ENCODE measurements at regions of chr22 and their contacts with region 1.

Region 1: GRCh38 chr22:48492366-48493320 is 1335.0 kb downstream of the BRD1 start:
- DNase-seq: peak in 3 of 9 experiments; percentile 15 to 57 (median 51)
- ATAC-seq: no peak
- H3K4me3 ChIP-seq: no peak overlapping the region
- H3K4me3 Mint-ChIP-seq: no peak overlapping the region
- H3K27ac ChIP-seq: no peak overlapping the region
- H3K27ac Mint-ChIP-seq: no peak overlapping the region
- H3K4me1 ChIP-seq: no peaks in the 10 kb centered on the region
- H3K4me1 Mint-ChIP-seq: peaks cover 2% of the 10 kb centered on the region
- H3K27me3 ChIP-seq: peaks cover 4 to 15% of the 10 kb centered on the region in 2 experiments
- H3K27me3 Mint-ChIP-seq: peaks cover 43% of the 10 kb centered on the region
- CTCF ChIP-seq: no peak

Region 2: GRCh38 chr22:47213571-47214230 is 1278.9 kb before region 1 on chr22:
- CTCF ChIA-PET with region 1: no interaction called
- POLR2A ChIA-PET with region 1: no interaction called
- intact Hi-C with region 1: loop called in 1 of 2 experiments (anchors 5 kb)
- DNase-seq: peak in 6 of 9 experiments; percentile 9 to 58 (median 39)
- ATAC-seq: peak; percentile 31
- H3K4me3 ChIP-seq: no peak overlapping the region
- H3K4me3 Mint-ChIP-seq: no peak overlapping the region
- H3K27ac ChIP-seq: no peak overlapping the region
- H3K27ac Mint-ChIP-seq: no peak overlapping the region
- H3K4me1 ChIP-seq: no peaks in the 10 kb centered on the region
- H3K4me1 Mint-ChIP-seq: no peaks in the 10 kb centered on the region
- H3K27me3 ChIP-seq: no peaks in the 10 kb centered on the region
- H3K27me3 Mint-ChIP-seq: peaks cover 4% of the 10 kb centered on the region
- CTCF ChIP-seq: peak; percentile 68

Region 3: GRCh38 chr22:48507595-48508350 is 15.1 kb after region 1 on chr22:
- CTCF ChIA-PET with region 1: no interaction called
- POLR2A ChIA-PET with region 1: no interaction called
- intact Hi-C with region 1: no loop called
- DNase-seq: peak in 1 of 9 experiments; percentile 4
- ATAC-seq: no peak
- H3K4me3 ChIP-seq: no peak overlapping the region
- H3K4me3 Mint-ChIP-seq: no peak overlapping the region
- H3K27ac ChIP-seq: no peak overlapping the region
- H3K27ac Mint-ChIP-seq: no peak overlapping the region
- H3K4me1 ChIP-seq: no peaks in the 10 kb centered on the region
- H3K4me1 Mint-ChIP-seq: no peaks in the 10 kb centered on the region
- H3K27me3 ChIP-seq: no peaks in the 10 kb centered on the region
- H3K27me3 Mint-ChIP-seq: no peaks in the 10 kb centered on the region
- CTCF ChIP-seq: no peak